MCF 10A (cell line): ENCODE measurements at regions of chr2 and their contacts with region 1.

Region 1: DNA sequence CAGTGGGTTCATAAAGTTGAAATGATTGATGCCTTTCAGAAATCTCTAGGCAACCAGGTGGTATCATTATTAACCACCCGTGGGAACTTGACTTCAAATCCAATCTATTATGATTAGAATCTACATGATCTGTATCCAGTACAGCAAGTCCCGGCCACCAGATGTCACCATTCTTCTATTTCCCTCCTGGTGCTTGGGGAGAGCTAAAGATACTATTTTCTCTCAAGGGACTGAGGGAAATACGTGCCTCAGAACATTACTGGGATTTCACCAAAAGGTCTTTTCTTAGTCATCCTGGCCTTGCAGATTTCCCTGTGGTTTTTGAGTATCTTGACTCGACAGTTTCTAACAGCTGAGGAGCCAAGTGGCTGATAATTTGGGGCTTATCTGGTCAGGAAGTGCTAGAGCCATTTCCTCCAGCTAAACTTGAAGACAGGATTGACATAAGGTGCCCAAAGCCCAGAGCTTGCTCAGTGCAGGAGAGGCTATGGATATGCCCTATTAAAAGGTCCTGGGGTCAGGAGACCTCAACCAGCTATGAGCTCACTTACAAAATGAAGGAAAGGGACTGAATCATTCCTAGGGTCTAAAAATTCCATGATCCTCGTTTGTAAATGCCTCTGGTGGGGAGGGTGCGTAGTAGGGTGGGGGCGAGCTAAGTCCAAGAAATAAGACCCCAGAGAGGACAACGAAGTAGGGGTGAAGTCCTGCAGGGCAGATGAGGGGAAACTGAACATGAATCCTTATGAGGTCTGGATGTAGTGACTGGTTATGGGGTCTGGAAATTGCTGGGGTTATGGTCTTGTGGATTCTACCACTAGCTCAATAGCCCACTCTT is 135.4 kb upstream of the MGAT5 start:
- DNase-seq: peak; percentile 91
- H3K4me3 Mint-ChIP-seq: peak overlapping the region; percentile 26
- H3K27ac Mint-ChIP-seq: no peak overlapping the region
- H3K4me1 Mint-ChIP-seq: peaks cover 23% of the 10 kb centered on the region
- H3K27me3 Mint-ChIP-seq: no peaks in the 10 kb centered on the region
- CTCF ChIP-seq: peak; percentile 74

Region 2: GRCh38 chr2:133886735-133887660 is 231.5 kb before region 1 on chr2:
- CTCF ChIA-PET with region 1: interaction called, 61 read pairs
- POLR2A ChIA-PET with region 1: no interaction called
- intact Hi-C with region 1: loop called (anchors 2 kb)
- DNase-seq: peak; percentile 87
- H3K4me3 Mint-ChIP-seq: no peak overlapping the region
- H3K27ac Mint-ChIP-seq: no peak overlapping the region
- H3K4me1 Mint-ChIP-seq: peaks cover 7% of the 10 kb centered on the region
- H3K27me3 Mint-ChIP-seq: peaks cover 14% of the 10 kb centered on the region
- CTCF ChIP-seq: peak; percentile 52

Region 3: DNA sequence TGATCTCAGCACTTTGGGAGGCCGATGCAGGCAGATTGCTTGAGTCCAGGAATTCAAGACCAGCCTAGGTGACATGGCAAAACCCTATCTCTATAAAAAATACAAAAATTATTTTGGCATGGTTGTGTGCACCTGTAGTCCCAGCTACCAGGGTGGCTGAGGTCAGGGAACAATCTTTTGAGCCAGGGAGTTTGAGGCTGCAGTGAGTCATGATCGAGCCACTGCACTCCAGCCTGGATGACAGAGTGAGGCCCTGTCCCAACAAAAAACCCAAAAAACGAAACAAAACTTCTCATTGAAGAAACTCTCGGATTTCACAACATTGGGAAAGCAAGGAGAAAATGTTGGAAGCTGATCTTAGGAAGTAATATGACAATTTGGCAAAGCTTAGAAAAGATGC is 181.9 kb before region 1 on chr2:
- CTCF ChIA-PET with region 1: no interaction called
- POLR2A ChIA-PET with region 1: no interaction called
- intact Hi-C with region 1: no loop called
- DNase-seq: peak; percentile 16
- H3K4me3 Mint-ChIP-seq: no peak overlapping the region
- H3K27ac Mint-ChIP-seq: no peak overlapping the region
- H3K4me1 Mint-ChIP-seq: no peaks in the 10 kb centered on the region
- H3K27me3 Mint-ChIP-seq: no peaks in the 10 kb centered on the region
- CTCF ChIP-seq: no peak

Region 4: DNA sequence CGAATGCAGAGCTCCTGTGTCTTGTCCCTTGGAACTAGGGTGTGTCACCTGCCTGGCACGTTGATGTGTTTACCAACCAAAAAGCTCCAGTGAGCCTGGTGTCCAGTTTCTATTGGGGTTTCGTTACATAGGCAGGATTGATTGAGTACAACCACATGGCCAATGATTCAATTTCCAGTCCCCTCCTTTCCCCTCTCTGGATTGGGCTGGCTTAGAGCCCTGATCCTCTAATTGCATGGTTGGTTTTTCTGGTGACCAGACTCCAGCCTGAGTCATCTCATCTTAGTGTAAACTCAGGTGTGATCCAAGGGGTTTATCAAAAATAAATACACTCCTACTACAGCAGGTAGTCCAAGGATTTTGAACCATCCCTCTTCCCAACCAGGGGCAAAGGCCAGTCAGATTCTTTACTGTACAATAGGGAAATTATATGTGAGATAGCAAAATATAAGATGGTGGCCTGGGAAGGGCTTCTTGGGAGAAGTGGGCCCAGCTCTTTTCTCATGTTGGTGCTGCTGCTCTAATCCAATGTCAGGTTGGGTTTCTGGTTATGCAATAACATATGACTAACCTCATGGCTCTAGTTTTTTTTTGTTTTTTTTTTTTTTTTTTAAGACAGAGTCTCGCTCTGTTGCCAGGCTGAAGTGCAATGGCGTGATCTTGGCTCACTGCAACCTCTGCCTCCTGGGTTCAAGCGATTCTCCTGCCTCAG is 70.7 kb after region 1 on chr2:
- CTCF ChIA-PET with region 1: interaction called, 5 read pairs
- POLR2A ChIA-PET with region 1: interaction called, 19 read pairs
- intact Hi-C with region 1: no loop called
- DNase-seq: peak; percentile 94
- H3K4me3 Mint-ChIP-seq: no peak overlapping the region
- H3K27ac Mint-ChIP-seq: peak overlapping the region; percentile 91
- H3K4me1 Mint-ChIP-seq: peaks cover 8% of the 10 kb centered on the region
- H3K27me3 Mint-ChIP-seq: no peaks in the 10 kb centered on the region
- CTCF ChIP-seq: no peak

Region 5: DNA sequence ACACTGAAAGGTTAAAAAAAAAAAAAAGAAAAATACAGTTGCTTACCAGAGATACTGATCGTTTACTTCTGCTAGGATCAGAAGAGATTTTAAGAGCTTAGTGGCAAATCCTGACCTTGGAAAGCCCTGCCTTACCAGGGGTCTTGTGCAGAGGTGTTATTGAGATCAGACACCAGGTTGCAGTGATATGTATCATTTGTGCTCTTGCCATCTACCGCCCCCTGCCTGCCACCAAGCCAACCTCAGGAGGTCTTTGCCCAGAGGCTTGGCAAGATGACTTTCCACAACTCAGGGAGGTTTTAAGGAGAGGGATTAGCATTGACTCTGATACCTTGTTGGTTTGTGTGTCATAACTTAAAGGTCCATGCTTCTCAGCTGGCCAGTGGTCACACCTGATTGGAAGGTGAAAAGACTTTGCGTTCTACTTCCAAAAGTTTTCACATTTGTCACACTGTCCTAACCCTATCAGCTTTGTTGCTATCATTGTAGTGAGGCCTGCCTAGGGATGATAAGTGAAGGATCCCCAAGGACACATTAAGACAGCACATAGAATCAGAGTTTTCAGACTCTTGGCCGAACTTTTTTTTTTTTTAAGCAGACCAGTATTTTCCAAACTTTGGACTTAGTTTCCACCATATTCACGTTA is 89.2 kb after region 1 on chr2:
- CTCF ChIA-PET with region 1: interaction called, 144 read pairs
- POLR2A ChIA-PET with region 1: interaction called, 27 read pairs
- intact Hi-C with region 1: loop called (anchors 5 kb)
- DNase-seq: peak; percentile 69
- H3K4me3 Mint-ChIP-seq: no peak overlapping the region
- H3K27ac Mint-ChIP-seq: no peak overlapping the region
- H3K4me1 Mint-ChIP-seq: peaks cover 11% of the 10 kb centered on the region
- H3K27me3 Mint-ChIP-seq: no peaks in the 10 kb centered on the region
- CTCF ChIP-seq: peak; percentile 73

Region 6: DNA sequence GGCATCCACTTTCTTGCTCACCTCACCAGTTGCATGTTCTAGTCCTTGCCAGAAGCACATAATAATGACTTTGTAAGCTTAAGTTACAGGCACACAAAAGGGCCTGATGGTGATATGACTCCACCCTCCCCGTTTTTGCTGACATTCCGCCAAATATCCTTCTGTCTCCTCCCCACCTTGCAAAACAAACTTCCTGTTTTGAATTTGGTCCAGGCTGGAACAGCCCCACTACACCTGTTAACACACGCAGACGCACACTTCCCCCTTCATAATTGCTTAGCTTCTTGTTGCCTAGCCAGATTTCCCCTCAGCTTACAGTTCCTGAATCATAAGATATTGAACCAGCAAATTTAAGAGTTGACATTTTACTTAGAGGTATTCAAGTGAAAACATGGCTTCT is 135.3 kb after region 1 on chr2 and contains the start of gene MGAT5:
- CTCF ChIA-PET with region 1: interaction called, 19 read pairs
- POLR2A ChIA-PET with region 1: no interaction called
- intact Hi-C with region 1: no loop called
- DNase-seq: peak; percentile 70
- H3K4me3 Mint-ChIP-seq: no peak within 1 kb of the TSS
- H3K27ac Mint-ChIP-seq: no peak within 1 kb of the TSS
- H3K4me1 Mint-ChIP-seq: peaks cover 13% of the 10 kb centered on the region
- H3K27me3 Mint-ChIP-seq: no peaks in the 10 kb centered on the region
- CTCF ChIP-seq: no peak
- total RNA-seq, gene MGAT5: 22.2 and 32.3 TPM in 2 replicates

Region 7: GRCh38 chr2:134402410-134402809 is 283.9 kb after region 1 on chr2:
- CTCF ChIA-PET with region 1: interaction called, 11 read pairs
- POLR2A ChIA-PET with region 1: interaction called, 13 read pairs
- intact Hi-C with region 1: no loop called
- DNase-seq: peak; percentile 84
- H3K4me3 Mint-ChIP-seq: no peak overlapping the region
- H3K27ac Mint-ChIP-seq: peak overlapping the region; percentile 8
- H3K4me1 Mint-ChIP-seq: peaks cover 79% of the 10 kb centered on the region
- H3K27me3 Mint-ChIP-seq: no peaks in the 10 kb centered on the region
- CTCF ChIP-seq: no peak

Region 8: GRCh38 chr2:134453476-134453875 is 335.0 kb after region 1 on chr2:
- CTCF ChIA-PET with region 1: interaction called, 55 read pairs
- POLR2A ChIA-PET with region 1: interaction called, 3 read pairs
- intact Hi-C with region 1: loop called (anchors 1 kb)
- DNase-seq: no peak
- H3K4me3 Mint-ChIP-seq: no peak overlapping the region
- H3K27ac Mint-ChIP-seq: no peak overlapping the region
- H3K4me1 Mint-ChIP-seq: peaks cover 5% of the 10 kb centered on the region
- H3K27me3 Mint-ChIP-seq: no peaks in the 10 kb centered on the region
- CTCF ChIP-seq: no peak